Activated T-helper 2 cell treated with anti-CD3 and anti-CD28 coated beads, Interferon-gamma antibody, Interleukin-2, Interleukin-4, amounts not matched to agents 10 μg/mL and 5 μg/mL and 100 μg/mL, durations not matched to agents 14 hours and 24 hours and 36 hours (primary cell): ENCODE measurements at regions of chr10 and their contacts with region 1.

Region 1: DNA sequence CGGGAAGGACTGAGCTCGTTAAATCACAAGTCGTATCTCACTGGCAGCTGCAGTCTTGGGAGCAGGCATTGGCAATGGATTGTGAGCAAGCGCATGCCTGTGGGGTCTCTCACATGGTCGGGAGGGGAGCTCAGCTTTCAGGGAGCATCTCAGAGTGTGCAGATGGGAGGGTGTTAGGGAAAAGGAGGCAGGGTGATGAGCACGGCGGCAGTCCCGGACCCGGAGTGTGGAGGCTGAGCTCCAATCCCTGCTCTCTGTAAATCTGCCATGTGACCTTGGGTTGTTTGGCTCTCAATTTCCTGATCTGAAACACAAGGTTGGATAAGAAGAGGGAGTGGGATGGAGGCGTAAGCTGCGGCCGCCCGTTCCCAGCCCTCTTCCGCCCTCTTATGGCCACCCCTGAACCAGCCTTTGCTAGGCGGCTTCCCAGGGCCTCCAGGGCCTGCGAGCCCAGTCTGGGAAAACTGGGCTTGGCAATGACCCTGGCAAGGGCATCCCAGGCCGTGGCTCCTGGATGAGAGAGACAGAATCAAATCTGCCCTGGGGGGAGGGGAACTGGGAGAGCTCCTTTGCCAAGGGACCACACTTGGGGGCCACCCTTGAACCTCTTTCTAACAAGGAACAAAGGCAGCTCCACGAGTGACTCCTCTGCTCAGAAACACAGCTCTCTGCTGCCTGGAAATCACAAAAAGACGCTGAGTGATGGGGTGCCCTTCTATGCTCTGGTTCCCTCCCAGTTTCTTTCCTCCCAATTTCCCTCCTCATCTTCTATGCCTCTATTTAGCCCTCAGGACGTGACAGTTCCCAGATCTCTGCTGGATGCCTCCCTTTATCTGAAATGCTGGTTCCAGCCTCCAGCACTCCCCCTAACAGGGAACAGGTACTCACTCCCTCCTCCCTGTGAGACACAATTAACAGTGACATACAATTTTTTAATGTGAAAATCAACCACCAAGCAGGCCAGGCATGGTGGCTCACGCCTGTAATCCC is 41.7 kb upstream of the LOXL4 start:
- DNase-seq: no peak
- H3K4me3 Mint-ChIP-seq: no peak overlapping the region
- H3K27ac Mint-ChIP-seq: no peak overlapping the region
- H3K4me1 Mint-ChIP-seq: no peaks in the 10 kb centered on the region
- H3K27me3 Mint-ChIP-seq: peaks cover 21% of the 10 kb centered on the region

Region 2: GRCh38 chr10:98170249-98171117 is 139.2 kb before region 1 on chr10:
- intact Hi-C with region 1: loop called (anchors 1 kb)
- DNase-seq: no peak
- H3K4me3 Mint-ChIP-seq: no peak overlapping the region
- H3K27ac Mint-ChIP-seq: no peak overlapping the region
- H3K4me1 Mint-ChIP-seq: peaks cover 15% of the 10 kb centered on the region
- H3K27me3 Mint-ChIP-seq: no peaks in the 10 kb centered on the region